ENCODE measurements at regions of chr15 and their contacts with region 1.

Region 1: GRCh38 chr15:65086017-65086679 is 9.6 kb downstream of the KBTBD13 start:
- DNase-seq: no peak
- ATAC-seq: no peak

Region 2: DNA sequence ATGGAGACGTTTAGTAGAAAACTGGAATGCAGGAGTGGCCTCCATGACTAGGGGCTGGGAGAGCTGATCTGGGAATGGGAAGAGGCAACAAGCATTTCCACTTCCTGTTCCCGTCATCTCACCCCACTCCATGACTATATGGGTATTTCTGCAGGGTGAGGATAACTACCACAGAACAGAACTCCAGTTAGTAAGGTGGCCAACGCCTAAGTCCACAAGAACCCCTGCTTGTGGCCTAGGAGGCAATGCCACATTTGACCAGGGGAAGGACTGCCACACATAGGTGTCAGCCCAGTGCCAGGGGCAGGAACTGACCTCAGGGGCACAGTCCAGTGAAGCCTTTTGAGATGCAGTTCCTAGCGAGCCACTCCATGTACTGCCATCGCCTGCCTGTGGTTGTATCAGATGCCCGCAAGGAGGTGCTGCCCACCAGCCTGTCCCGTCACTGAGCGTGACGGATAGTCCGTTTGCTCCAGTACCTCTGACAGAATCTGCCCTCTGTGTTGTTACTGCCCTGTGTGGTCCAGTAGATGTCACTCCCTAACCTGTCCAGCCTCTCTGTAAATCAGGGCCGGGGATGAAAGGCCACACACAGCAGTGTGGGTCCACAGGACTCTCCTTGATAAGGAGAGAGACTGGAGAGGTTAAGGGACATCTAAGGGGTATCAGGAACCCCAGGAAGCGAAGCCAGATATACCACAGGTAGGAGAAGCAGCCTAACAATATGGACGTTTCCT is 53.2 kb before region 1 on chr15:
- intact Hi-C with region 1: loop called (anchors 10 kb)
- DNase-seq: peak; percentile 64
- ATAC-seq: peak; percentile 73

Region 3: DNA sequence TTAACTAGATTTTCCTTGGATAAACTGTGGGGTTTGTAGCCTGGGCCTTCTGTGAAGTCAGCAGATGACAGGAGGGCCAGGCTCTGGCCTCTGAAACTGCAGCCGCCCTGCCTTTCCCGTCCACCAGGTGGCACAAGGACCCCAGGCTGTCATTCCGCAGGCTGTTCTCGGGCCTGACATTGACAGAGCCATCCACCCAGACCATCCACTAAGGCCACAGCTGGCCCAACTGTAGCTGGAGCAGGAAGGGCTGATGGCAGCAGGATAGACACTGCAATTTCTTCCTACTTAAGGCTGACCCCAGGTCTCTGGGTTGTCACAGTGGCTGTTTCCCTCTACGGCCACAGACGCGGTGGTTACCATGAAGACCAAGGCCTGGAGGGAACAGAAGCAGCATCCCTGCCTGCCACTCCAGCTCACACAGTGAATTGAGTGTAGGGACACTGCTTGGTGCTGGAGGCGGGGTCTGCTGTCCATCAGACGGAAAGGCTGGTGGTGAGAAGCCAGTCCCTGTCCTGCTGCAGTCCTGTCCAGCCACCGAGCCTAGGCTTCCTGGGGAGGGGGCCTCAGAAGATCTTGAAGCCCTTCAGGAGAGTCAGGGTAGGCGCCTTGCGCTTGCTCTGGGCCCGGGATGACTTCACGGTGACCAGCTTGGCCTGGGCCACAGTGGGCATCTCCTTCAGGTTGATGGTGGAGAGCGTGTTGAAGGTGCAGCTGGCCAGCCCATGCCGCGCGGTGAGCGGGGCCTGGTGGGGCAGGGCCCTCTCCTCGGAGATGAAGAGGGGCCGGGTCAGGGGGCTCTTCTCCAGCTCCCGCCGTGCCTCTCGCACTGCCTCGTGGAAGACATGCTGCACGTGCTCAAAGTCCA is 31.6 kb before region 1 on chr15:
- intact Hi-C with region 1: loop called (anchors 2 kb)
- DNase-seq: peak; percentile 84
- ATAC-seq: peak; percentile 86

Region 4: GRCh38 chr15:65231306-65231705 is 145.2 kb after region 1 on chr15:
- intact Hi-C with region 1: no loop called
- DNase-seq: no peak
- ATAC-seq: no peak